Vagina (tissue), 2 donors: ENCODE measurements at regions of chr18 and their contacts with region 1.

Region 1: DNA sequence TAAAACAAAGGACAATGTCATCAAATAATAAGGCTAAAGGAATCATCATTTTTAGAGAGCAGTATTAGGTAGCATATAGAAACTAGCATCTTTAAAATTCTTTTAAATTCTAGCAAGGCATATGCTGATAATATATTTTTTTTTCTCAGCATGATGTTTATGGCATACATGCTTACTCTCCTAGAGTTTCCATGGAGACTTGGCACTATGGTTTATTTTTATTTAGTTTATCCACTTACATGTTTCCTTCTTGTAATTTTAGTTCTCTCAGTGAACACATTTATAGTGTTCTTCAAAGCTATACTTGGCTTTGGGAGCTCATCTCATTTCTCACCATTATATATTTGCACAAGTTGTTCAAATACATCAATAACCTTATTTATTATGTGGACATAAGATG is 413.8 kb upstream of the LINC00305 start:
- DNase-seq: no peak
- H3K4me3 ChIP-seq: no peak overlapping the region
- H3K27ac ChIP-seq: no peak overlapping the region
- H3K4me1 ChIP-seq: no peaks in the 10 kb centered on the region
- H3K27me3 ChIP-seq: no peaks in the 10 kb centered on the region
- CTCF ChIP-seq: no peak
- POLR2A ChIP-seq: no peak

Region 2: DNA sequence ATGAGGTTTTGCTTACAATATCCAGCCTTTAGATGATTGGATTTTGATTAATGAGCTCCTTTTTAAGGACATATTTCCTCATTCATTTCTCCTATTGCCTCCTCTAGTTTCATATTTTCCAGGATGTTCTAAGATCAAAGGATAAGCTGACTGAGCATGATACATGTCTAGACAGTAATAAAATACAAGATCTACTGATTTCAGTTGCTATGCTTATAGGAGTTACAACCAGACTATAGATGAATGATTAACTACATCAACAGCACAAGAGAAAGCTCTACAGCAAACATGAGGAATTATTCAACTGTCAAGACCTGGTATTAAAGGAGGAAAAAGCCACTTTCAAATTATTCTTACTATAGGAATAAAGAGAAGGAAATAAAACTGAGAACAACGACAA is 328.8 kb before region 1 on chr18:
- intact Hi-C with region 1: no loop called
- DNase-seq: no peak
- H3K4me3 ChIP-seq: no peak overlapping the region
- H3K27ac ChIP-seq: no peak overlapping the region
- H3K4me1 ChIP-seq: no peaks in the 10 kb centered on the region
- H3K27me3 ChIP-seq: no peaks in the 10 kb centered on the region
- CTCF ChIP-seq: no peak
- POLR2A ChIP-seq: no peak

Region 3: DNA sequence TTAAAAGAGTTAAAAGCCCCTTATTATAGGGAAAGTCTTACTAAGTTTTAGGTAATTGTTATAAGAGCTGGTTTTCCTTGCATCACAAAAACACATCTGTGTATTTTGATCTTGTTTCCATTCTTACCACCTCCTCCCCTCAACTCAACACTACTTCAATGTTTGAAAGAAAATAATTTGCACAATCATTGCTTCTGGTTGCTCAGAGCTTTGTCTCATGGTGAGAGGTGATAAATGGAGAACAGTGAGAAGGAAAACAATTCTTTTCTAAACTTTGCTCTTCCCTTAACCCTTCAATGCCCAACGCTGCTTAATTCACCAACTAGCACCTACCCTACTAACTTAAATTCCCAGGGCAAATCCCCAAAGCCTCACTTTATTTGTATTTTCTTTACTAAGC is 145.7 kb before region 1 on chr18:
- intact Hi-C with region 1: no loop called
- DNase-seq: no peak
- H3K4me3 ChIP-seq: no peak overlapping the region
- H3K27ac ChIP-seq: no peak overlapping the region
- H3K4me1 ChIP-seq: no peaks in the 10 kb centered on the region
- H3K27me3 ChIP-seq: no peaks in the 10 kb centered on the region
- CTCF ChIP-seq: no peak
- POLR2A ChIP-seq: no peak

Region 4: DNA sequence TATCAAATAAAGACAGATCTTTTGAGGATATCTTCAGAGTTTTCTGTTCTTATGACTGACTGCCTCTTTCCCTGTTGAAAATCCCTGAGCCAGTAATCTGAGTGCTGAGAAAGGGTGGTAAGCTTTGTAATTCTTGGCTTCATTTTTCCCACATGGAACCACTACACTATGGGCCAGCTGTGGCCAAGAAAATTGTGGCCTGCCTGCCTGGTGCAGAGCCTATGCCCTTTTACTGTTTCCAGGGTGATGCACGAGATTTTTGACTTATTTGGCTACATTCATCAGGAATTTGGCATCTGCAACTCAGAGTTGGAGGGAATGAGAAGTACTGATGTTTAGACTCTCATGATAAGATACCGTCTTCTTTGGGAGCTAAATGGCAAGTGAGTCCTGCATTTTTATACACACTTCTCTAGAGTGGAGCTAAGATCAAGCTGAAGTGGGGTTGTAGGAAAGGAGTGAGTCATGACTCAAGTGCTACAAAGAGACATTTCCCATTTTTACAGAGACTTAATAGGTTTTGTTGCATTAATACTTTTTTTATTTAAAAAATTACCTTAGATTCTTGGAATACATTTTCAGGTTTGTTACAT is 860.0 kb after region 1 on chr18:
- intact Hi-C with region 1: loop called (anchors 5 kb)
- DNase-seq: no peak
- H3K4me3 ChIP-seq: no peak overlapping the region
- H3K27ac ChIP-seq: no peak overlapping the region
- H3K4me1 ChIP-seq: no peaks in the 10 kb centered on the region
- H3K27me3 ChIP-seq: no peaks in the 10 kb centered on the region
- CTCF ChIP-seq: no peak
- POLR2A ChIP-seq: no peak